GM12878 (cell line): ENCODE measurements at regions of chr1 and their contacts with region 1.

Region 1: GRCh38 chr1:233641029-233641428 is 27.1 kb downstream of the KCNK1 start:
- DNase-seq: no peak
- ATAC-seq: no peak
- H3K4me3 ChIP-seq: no peak overlapping the region
- H3K27ac ChIP-seq: no peak overlapping the region
- H3K4me1 ChIP-seq: peaks cover 21% of the 10 kb centered on the region
- H3K27me3 ChIP-seq: no peaks in the 10 kb centered on the region
- CTCF ChIP-seq: no peak
- EP300 ChIP-seq: no peak
- POLR2A ChIP-seq: no peak
- RAD21 ChIP-seq: no peak

Region 2: GRCh38 chr1:233656032-233656620 is 15.1 kb after region 1 on chr1:
- CTCF ChIA-PET with region 1: interaction called, 6 read pairs
- POLR2A ChIA-PET with region 1: interaction called, 18 read pairs
- RAD21 ChIA-PET with region 1: interaction called, 4 read pairs
- SMC1A ChIA-PET with region 1: interaction called, 18 read pairs
- in situ Hi-C with region 1: no loop called
- intact Hi-C with region 1: no loop called
- DNase-seq: no peak
- ATAC-seq: peak; percentile 58
- H3K4me3 ChIP-seq: no peak overlapping the region
- H3K27ac ChIP-seq: no peak overlapping the region
- H3K4me1 ChIP-seq: no peaks in the 10 kb centered on the region
- H3K27me3 ChIP-seq: no peaks in the 10 kb centered on the region
- CTCF ChIP-seq: no peak
- EP300 ChIP-seq: no peak
- POLR2A ChIP-seq: no peak
- RAD21 ChIP-seq: no peak